Activated B cell treated with CpG ODN at 0.5 μM for 24 hours (primary cell): ENCODE measurements at regions of chr4 and their contacts with region 1.

Region 1: GRCh38 chr4:118765399-118765798 is 70.5 kb downstream of the SEC24D start:
- DNase-seq: no peak
- ATAC-seq: no peak
- H3K4me3 Mint-ChIP-seq: no peak overlapping the region
- H3K27ac Mint-ChIP-seq: no peak overlapping the region
- H3K4me1 Mint-ChIP-seq: peaks cover 8% of the 10 kb centered on the region
- H3K27me3 Mint-ChIP-seq: no peaks in the 10 kb centered on the region
- CTCF ChIP-seq: no peak

Region 2: DNA sequence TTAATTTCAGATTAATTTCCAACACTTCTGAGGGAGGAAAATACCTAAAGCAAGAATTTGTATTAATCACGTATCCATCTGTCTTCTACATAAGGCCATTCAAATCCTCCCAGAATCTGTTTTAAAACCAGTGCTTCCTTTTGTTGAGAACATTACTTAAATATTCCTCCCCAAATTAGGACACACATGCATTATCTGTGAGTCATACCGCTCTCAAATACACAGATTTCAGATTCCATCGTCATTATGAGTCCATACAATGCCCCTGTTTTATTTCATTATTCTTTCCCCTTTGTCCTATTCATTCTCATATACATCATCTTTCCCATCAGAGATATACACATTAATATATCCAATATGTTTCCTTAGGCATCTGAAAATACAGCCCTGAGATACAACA is 355.3 kb before region 1 on chr4:
- CTCF ChIA-PET with region 1: no interaction called
- POLR2A ChIA-PET with region 1: no interaction called
- intact Hi-C with region 1: no loop called
- DNase-seq: no peak
- ATAC-seq: no peak
- H3K4me3 Mint-ChIP-seq: no peak overlapping the region
- H3K27ac Mint-ChIP-seq: no peak overlapping the region
- H3K4me1 Mint-ChIP-seq: no peaks in the 10 kb centered on the region
- H3K27me3 Mint-ChIP-seq: peaks cover 2% of the 10 kb centered on the region
- CTCF ChIP-seq: no peak

Region 3: DNA sequence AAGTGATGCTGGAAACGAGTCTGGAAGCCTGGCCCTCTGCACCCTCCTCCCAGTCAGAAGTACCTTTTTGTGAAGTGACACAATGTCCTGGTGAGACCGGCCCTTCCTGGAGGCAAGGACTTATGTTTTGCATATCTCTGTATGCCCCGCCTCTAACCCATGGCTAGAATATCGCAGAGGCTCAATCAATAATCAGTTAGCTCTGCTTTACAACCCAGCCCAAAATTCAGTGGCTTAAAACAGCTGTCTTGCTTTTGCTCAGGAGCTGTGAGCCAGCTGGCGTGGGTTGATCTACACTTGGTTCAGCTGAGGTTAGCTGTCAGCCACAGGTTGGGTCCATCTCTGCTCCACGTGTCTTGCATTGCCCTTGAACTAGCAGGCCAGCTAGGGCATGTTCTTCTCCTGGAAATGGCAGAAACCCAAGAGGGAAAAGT is 179.0 kb before region 1 on chr4:
- CTCF ChIA-PET with region 1: no interaction called
- POLR2A ChIA-PET with region 1: no interaction called
- intact Hi-C with region 1: loop called (anchors 1 kb)
- DNase-seq: no peak
- ATAC-seq: no peak
- H3K4me3 Mint-ChIP-seq: no peak overlapping the region
- H3K27ac Mint-ChIP-seq: no peak overlapping the region
- H3K4me1 Mint-ChIP-seq: peaks cover 11% of the 10 kb centered on the region
- H3K27me3 Mint-ChIP-seq: peaks cover 20% of the 10 kb centered on the region
- CTCF ChIP-seq: no peak

Region 4: GRCh38 chr4:118684873-118685811 is 80.3 kb before region 1 on chr4 and contains the start of gene METTL14:
- CTCF ChIA-PET with region 1: no interaction called
- POLR2A ChIA-PET with region 1: no interaction called
- intact Hi-C with region 1: loop called (anchors 2 kb)
- DNase-seq: peak; percentile 84
- ATAC-seq: peak; percentile 95
- H3K4me3 Mint-ChIP-seq: peak within 1 kb of the TSS; percentile 98
- H3K27ac Mint-ChIP-seq: peak within 1 kb of the TSS; percentile 95
- H3K4me1 Mint-ChIP-seq: peaks cover 23% of the 10 kb centered on the region
- H3K27me3 Mint-ChIP-seq: no peaks in the 10 kb centered on the region
- CTCF ChIP-seq: no peak
- total RNA-seq, gene METTL14: 56.5 and 62.7 TPM in 2 replicates

Region 5: GRCh38 chr4:118740869-118741268 is 24.5 kb before region 1 on chr4:
- CTCF ChIA-PET with region 1: no interaction called
- POLR2A ChIA-PET with region 1: no interaction called
- intact Hi-C with region 1: loop called (anchors 1 kb)
- DNase-seq: no peak
- ATAC-seq: no peak
- H3K4me3 Mint-ChIP-seq: no peak overlapping the region
- H3K27ac Mint-ChIP-seq: no peak overlapping the region
- H3K4me1 Mint-ChIP-seq: no peaks in the 10 kb centered on the region
- H3K27me3 Mint-ChIP-seq: no peaks in the 10 kb centered on the region
- CTCF ChIP-seq: peak; percentile 37

Region 6: DNA sequence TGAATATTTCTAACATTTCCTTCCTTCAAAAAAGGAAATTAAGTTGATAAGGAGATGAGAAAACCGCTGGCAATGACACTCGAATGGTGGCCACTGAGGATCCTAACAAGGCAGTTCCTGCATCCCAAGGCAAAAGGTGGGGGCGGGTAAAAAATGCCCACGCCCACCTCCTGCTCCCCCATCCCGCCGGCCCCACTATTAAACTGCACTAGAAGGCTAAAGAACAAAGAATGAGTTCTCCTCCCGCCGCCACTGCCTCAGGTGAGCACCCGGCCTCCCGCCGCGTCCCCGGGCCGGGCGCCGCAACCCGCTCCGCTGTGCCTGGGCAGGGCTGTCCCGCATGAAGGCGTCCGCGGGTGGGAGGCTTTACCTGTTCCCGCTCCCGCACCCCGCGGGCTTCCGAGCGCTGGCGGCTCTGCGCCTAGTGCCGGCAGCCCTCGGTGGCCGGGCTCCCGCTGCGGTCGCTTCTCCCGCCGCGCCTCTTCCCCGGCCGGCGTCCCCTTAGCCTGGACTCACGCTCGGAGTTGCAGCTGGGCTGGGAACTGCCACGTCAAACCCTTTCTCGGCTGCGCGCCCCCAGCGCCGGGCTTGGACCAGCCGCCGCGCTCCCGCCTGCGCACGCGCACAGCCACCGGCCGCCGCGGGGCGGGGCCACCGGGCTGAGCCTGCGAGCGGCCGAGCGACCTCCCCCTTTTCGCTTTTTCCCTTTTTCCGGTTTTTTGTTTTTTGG is 70.3 kb after region 1 on chr4 and contains the start of gene SEC24D:
- CTCF ChIA-PET with region 1: no interaction called
- POLR2A ChIA-PET with region 1: no interaction called
- intact Hi-C with region 1: loop called (anchors 1 kb)
- DNase-seq: peak; percentile 90
- ATAC-seq: peak; percentile 88
- H3K4me3 Mint-ChIP-seq: peak within 1 kb of the TSS; percentile 100
- H3K27ac Mint-ChIP-seq: peak within 1 kb of the TSS; percentile 96
- H3K4me1 Mint-ChIP-seq: peaks cover 17% of the 10 kb centered on the region
- H3K27me3 Mint-ChIP-seq: no peaks in the 10 kb centered on the region
- CTCF ChIP-seq: no peak
- total RNA-seq, gene SEC24D: 19.4 and 22.6 TPM in 2 replicates

Region 7: DNA sequence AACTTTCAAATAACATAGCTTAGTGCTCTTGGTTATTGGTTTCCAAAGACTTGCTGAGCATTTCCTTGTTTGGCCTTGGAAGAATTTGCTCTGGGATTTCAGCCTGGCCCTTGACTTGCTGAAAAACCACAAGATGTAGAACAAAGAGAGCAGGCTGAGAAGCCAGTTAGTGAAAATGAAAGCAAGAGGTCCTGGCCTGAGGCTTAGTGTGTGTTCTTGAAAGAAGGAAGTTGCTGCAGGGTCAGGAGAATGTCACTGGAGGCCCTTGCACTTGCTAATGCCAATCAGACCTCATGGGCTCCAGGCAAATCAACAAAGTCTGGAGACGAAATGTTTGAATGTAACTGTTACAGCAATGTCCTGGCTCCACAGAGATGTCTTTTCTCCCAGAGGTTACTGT is 202.6 kb after region 1 on chr4:
- CTCF ChIA-PET with region 1: no interaction called
- POLR2A ChIA-PET with region 1: no interaction called
- intact Hi-C with region 1: loop called (anchors 10 kb)
- DNase-seq: no peak
- ATAC-seq: peak; percentile 83
- H3K4me3 Mint-ChIP-seq: no peak overlapping the region
- H3K27ac Mint-ChIP-seq: no peak overlapping the region
- H3K4me1 Mint-ChIP-seq: peaks cover 9% of the 10 kb centered on the region
- H3K27me3 Mint-ChIP-seq: no peaks in the 10 kb centered on the region
- CTCF ChIP-seq: no peak